ENCODE measurements at regions of chr19 and their contacts with region 1.

Region 1: DNA sequence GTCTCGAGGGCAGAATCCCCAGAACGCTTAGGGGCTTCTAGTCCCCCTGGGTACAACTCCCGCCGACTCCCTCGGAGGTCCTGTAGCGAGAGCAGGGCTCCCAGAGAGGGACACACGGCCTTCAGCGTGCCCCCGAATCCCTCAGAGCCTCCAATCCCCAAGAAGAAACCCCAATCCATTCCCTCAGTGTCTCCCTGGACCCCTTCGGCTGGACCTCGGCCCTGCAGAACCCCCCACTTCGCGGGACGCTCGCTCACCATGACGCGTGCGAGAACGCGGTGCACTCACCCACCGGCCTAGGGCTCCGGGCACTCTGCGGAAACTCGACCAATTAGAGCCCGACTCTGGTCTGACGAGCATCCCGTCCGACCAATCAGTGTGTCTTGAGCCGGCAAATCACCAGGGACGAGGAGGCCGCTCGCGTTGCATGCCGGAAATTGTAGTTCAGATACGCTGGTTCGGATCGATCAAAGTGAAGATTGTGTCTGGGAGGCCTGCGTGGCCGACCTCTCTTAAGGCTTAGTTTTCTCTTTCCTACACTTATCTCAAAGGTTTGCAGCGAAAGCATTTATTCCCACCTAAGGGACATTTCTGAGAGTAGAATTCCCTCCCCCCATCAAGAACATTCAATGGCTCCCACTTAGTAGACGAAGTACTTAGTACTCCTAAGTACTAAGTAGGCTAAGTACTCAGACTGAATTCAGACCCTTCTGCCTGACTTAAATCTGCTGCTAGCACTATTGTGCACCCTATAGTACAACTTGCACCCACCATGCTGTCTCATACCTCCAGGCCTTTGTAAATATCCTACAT is at the start of gene TMEM161A:
- DNase-seq: peak; percentile 97 to 99 (median 99)
- ATAC-seq: peak; percentile 97 to 99 (median 98)
- H3K4me3 ChIP-seq: peak within 1 kb of the TSS; percentile 40 to 90 (median 73)
- H3K27ac ChIP-seq: peak within 1 kb of the TSS in 11 of 12 donors; percentile 52 to 90 (median 74)
- H3K4me1 ChIP-seq: peaks cover 0 to 21% (median 10%) of the 10 kb centered on the region in 12 donors
- H3K27me3 ChIP-seq: no peaks in the 10 kb centered on the region
- CTCF ChIP-seq: no peak
- POLR2A ChIP-seq: peak; percentile 26 to 79
- total RNA-seq, gene TMEM161A: 12.3 to 29.7 (median 20.8) TPM

Region 2: DNA sequence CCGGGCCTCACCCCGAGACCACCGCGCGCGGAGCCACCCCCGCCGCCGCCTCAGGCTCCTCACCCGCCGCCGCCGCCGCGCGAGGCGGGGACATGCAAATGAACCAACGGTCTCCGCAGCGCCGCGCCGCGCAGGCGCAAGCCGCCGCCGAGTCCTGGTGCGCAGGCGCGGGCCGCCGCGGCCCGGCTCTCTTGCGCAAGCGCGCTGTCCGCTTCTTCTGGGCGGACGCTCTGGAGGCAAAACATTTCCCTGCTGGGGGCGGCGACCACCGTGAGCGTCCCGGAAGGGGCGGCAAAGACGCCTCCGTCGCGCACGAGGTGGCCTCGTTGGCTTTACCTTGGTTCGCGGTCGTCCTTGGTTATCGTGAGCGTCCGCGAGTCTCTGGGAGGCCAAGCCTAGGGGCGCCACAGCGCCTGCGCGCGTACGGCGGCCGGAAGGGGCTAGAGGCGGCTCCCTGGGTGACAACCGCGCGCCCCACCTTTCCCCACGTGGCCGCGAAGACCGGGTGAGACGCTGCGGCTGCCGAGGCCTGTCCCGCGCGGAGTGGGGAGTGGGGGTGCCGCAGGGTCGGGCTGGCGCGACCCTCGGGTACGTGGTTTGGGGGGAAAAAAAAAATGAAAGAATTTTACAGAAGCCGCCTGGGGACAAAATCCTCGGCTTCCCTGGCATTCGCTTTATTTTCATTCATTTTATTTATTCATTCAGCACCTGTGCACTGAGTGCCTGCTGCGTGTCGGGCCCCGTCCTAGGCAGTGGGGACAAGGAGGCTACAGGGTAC is 104.8 kb before region 1 on chr19 and contains the starts of genes ARMC6 and SUGP2:
- intact Hi-C with region 1: loop called in 1 of 10 experiments (anchors 1 kb)
- DNase-seq: peak; percentile 87 to 93 (median 90)
- ATAC-seq: peak; percentile 56 to 90 (median 86)
- H3K4me3 ChIP-seq: peak within 1 kb of the TSS; percentile 59 to 97 (median 84)
- H3K27ac ChIP-seq: peak within 1 kb of the TSS; percentile 91 to 100 (median 98)
- H3K4me1 ChIP-seq: peaks cover 0 to 36% (median 22%) of the 10 kb centered on the region in 12 donors
- H3K27me3 ChIP-seq: no peaks in the 10 kb centered on the region
- CTCF ChIP-seq: peak in 1 of 12 donors; percentile 12
- POLR2A ChIP-seq: peak in 1 of 2 donors; percentile 69
- total RNA-seq, gene ARMC6: 9.9 to 23.6 (median 18.0) TPM
- total RNA-seq, gene SUGP2: 36.1 to 76.5 (median 59.4) TPM

Region 3: GRCh38 chr19:19053508-19054314 is 84.7 kb before region 1 on chr19:
- intact Hi-C with region 1: loop called in 7 of 10 experiments (anchors 1 to 5 kb)
- DNase-seq: peak; percentile 59 to 84 (median 70)
- ATAC-seq: peak; percentile 35 to 82 (median 62)
- H3K4me3 ChIP-seq: no peak overlapping the region
- H3K27ac ChIP-seq: no peak overlapping the region
- H3K4me1 ChIP-seq: peaks cover 0 to 6% (median 0%) of the 10 kb centered on the region in 12 donors
- H3K27me3 ChIP-seq: no peaks in the 10 kb centered on the region
- CTCF ChIP-seq: peak; percentile 54 to 77 (median 74)
- POLR2A ChIP-seq: no peak

Region 4: GRCh38 chr19:19063183-19064097 is 74.9 kb before region 1 on chr19 and contains the start of gene SLC25A42:
- intact Hi-C with region 1: loop called in 5 of 10 experiments (anchors 2 to 5 kb)
- DNase-seq: peak; percentile 99 to 100 (median 100)
- ATAC-seq: peak; percentile 93 to 97 (median 96)
- H3K4me3 ChIP-seq: peak within 1 kb of the TSS; percentile 51 to 95 (median 81)
- H3K27ac ChIP-seq: peak within 1 kb of the TSS; percentile 53 to 94 (median 84)
- H3K4me1 ChIP-seq: peaks cover 0 to 50% (median 37%) of the 10 kb centered on the region in 12 donors
- H3K27me3 ChIP-seq: no peaks in the 10 kb centered on the region
- CTCF ChIP-seq: no peak
- POLR2A ChIP-seq: peak in 1 of 2 donors; percentile 61
- total RNA-seq, gene SLC25A42: 15.7 to 28.0 (median 17.9) TPM

Region 5: GRCh38 chr19:19179548-19180441 is 41.4 kb after region 1 on chr19:
- intact Hi-C with region 1: loop called in 1 of 10 experiments (anchors 5 kb)
- DNase-seq: no peak
- ATAC-seq: no peak
- H3K4me3 ChIP-seq: no peak overlapping the region
- H3K27ac ChIP-seq: no peak overlapping the region
- H3K4me1 ChIP-seq: no peaks in the 10 kb centered on the region
- H3K27me3 ChIP-seq: no peaks in the 10 kb centered on the region
- CTCF ChIP-seq: no peak
- POLR2A ChIP-seq: no peak

Region 6: GRCh38 chr19:19280561-19280960 is 142.2 kb after region 1 on chr19:
- intact Hi-C with region 1: no loop called
- DNase-seq: no peak
- ATAC-seq: peak in 1 of 4 donors; percentile 14
- H3K4me3 ChIP-seq: no peak overlapping the region
- H3K27ac ChIP-seq: no peak overlapping the region
- H3K4me1 ChIP-seq: no peaks in the 10 kb centered on the region
- H3K27me3 ChIP-seq: no peaks in the 10 kb centered on the region
- CTCF ChIP-seq: no peak
- POLR2A ChIP-seq: no peak